PC-9 (cell line): ENCODE measurements at regions of chr7 and their contacts with region 1.

Region 1: DNA sequence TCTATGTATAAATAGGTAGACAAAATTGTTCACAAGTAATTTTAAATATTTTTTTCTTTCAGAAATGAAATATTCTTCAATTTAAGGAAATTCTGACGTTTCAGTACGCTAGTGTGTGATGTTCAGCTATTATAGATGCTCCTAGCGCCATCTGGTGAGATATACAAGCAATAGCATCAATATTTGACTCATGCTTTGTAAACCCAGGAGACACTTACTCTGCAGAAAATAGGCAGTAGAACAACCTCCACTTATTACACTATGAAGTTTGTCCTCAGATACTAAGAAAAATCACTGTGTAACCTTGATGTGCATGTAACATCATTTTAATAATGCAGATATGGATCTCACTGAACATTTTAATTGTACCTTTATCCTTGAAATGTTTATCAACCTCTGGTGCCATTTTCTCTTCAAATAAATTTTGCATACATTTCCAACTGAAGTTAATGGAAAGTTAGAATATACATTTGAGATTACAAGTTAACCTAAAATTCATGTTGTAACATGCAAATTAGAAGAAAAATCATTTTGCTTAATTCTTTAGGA is 151.5 kb upstream of the FAM3C start:
- DNase-seq: peak in 1 of 2 experiments; percentile 62
- H3K4me3 ChIP-seq: no peak overlapping the region
- H3K27ac ChIP-seq: no peak overlapping the region
- H3K4me1 ChIP-seq: peaks cover 32% of the 10 kb centered on the region
- H3K27me3 ChIP-seq: no peaks in the 10 kb centered on the region
- CTCF ChIP-seq: peak; percentile 88

Region 2: DNA sequence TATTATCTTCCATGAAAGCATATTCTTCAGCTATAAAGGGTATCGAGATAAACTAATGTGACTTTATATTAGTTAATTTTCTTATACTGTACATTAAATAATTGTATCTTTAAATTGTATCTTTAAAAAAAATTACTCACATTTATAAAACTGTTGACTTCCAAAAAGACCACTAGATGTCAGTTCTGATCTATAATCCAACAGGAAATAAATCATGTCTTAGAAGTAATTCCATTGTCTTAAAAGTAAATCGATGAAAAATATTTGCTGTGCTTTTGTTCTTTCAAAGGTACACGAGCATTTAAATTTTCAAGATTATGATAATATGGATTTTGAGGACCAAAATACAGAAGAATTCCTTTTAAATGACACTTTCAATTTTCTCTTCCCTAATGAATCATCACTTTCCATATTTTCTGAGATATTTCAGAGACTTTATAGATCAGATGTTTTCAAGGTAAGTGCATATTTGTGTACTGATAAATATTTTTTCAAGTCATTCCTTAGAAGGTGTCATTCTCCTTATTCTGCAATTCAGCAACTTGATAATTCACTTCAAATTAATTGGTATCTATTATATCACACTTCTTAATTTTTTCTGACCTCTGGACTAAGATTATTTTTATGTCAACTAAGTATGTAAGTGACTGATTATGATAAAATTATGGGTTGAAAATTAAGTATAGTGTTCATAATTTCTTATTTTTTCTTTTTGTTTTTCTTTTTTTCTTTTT is 420.6 kb before region 1 on chr7:
- CTCF ChIA-PET with region 1: no interaction called
- POLR2A ChIA-PET with region 1: no interaction called
- intact Hi-C with region 1: loop called (anchors 2 kb)
- DNase-seq: no peak
- H3K4me3 ChIP-seq: no peak overlapping the region
- H3K27ac ChIP-seq: no peak overlapping the region
- H3K4me1 ChIP-seq: no peaks in the 10 kb centered on the region
- H3K27me3 ChIP-seq: no peaks in the 10 kb centered on the region
- CTCF ChIP-seq: peak; percentile 66

Region 3: GRCh38 chr7:121366852-121367431 is 180.7 kb before region 1 on chr7:
- CTCF ChIA-PET with region 1: interaction called, 10 read pairs
- POLR2A ChIA-PET with region 1: interaction called, 7 read pairs
- intact Hi-C with region 1: loop called (anchors 1 kb)
- DNase-seq: peak; percentile 15 to 48
- H3K4me3 ChIP-seq: no peak overlapping the region
- H3K27ac ChIP-seq: peak overlapping the region; percentile 38
- H3K4me1 ChIP-seq: peaks cover 16% of the 10 kb centered on the region; the same call in 1 of the 2 replicates
- H3K27me3 ChIP-seq: no peaks in the 10 kb centered on the region
- CTCF ChIP-seq: peak; percentile 94

Region 4: GRCh38 chr7:121420979-121421378 is 126.6 kb before region 1 on chr7:
- CTCF ChIA-PET with region 1: interaction called, 5 read pairs
- POLR2A ChIA-PET with region 1: no interaction called
- intact Hi-C with region 1: loop called (anchors 1 kb)
- DNase-seq: peak; percentile 46 to 94
- H3K4me3 ChIP-seq: peak overlapping the region; percentile 25; the same call in 1 of the 2 replicates
- H3K27ac ChIP-seq: peak overlapping the region; percentile 67
- H3K4me1 ChIP-seq: peaks cover 25% of the 10 kb centered on the region
- H3K27me3 ChIP-seq: no peaks in the 10 kb centered on the region
- CTCF ChIP-seq: no peak

Region 5: DNA sequence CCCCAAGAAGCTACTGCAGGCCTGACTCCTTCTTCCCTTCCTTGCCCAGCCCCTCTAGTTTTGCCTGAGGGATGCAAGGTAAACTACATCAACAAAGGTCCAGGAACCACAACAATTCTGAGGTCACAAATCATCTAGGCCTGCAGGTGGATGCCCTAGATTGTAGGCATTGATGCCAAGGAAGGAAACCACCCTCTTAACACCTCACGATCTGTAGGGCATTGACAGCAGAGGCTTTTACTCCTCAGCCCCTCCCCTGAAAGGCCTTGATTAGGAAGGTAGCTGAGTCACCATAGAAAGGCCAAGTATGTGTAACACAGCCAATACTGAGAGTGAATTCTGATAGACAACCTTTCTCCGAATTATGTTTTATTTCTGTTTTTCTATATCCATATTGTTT is 104.8 kb before region 1 on chr7:
- CTCF ChIA-PET with region 1: no interaction called
- POLR2A ChIA-PET with region 1: no interaction called
- intact Hi-C with region 1: loop called (anchors 1 kb)
- DNase-seq: peak; percentile 85 to 98
- H3K4me3 ChIP-seq: no peak overlapping the region
- H3K27ac ChIP-seq: peak overlapping the region; percentile 0; the same call in 1 of the 2 replicates
- H3K4me1 ChIP-seq: peaks cover 18% of the 10 kb centered on the region; the same call in 1 of the 2 replicates
- H3K27me3 ChIP-seq: no peaks in the 10 kb centered on the region
- CTCF ChIP-seq: no peak

Region 6: GRCh38 chr7:121473645-121474300 is 73.8 kb before region 1 on chr7:
- CTCF ChIA-PET with region 1: no interaction called
- POLR2A ChIA-PET with region 1: no interaction called
- intact Hi-C with region 1: no loop called
- DNase-seq: no peak
- H3K4me3 ChIP-seq: no peak overlapping the region
- H3K27ac ChIP-seq: no peak overlapping the region
- H3K4me1 ChIP-seq: no peaks in the 10 kb centered on the region
- H3K27me3 ChIP-seq: no peaks in the 10 kb centered on the region
- CTCF ChIP-seq: no peak

Region 7: GRCh38 chr7:121530227-121531174 is 17.1 kb before region 1 on chr7:
- CTCF ChIA-PET with region 1: interaction called, 3 read pairs
- POLR2A ChIA-PET with region 1: no interaction called
- intact Hi-C with region 1: loop called (anchors 1 kb)
- DNase-seq: peak; percentile 85 to 99
- H3K4me3 ChIP-seq: peak overlapping the region; percentile 42; the same call in 1 of the 2 replicates
- H3K27ac ChIP-seq: peak overlapping the region; percentile 97
- H3K4me1 ChIP-seq: peaks cover 41% of the 10 kb centered on the region
- H3K27me3 ChIP-seq: no peaks in the 10 kb centered on the region
- CTCF ChIP-seq: no peak; the same call in 1 of the 2 replicates

Region 8: GRCh38 chr7:122199141-122199551 is 651.5 kb after region 1 on chr7:
- CTCF ChIA-PET with region 1: no interaction called
- POLR2A ChIA-PET with region 1: no interaction called
- intact Hi-C with region 1: no loop called
- DNase-seq: no peak
- H3K4me3 ChIP-seq: no peak overlapping the region
- H3K27ac ChIP-seq: no peak overlapping the region
- H3K4me1 ChIP-seq: no peaks in the 10 kb centered on the region
- H3K27me3 ChIP-seq: no peaks in the 10 kb centered on the region
- CTCF ChIP-seq: no peak